ENCODE measurements at regions of chr14 and their contacts with region 1.

Region 1: GRCh38 chr14:58297762-58298476 is 436 bp upstream of the ARID4A start:
- DNase-seq: peak; percentile 96 to 100
- ATAC-seq: peak; percentile 82 to 95 (median 85)
- H3K4me3 ChIP-seq: peak overlapping the region; percentile 96
- H3K4me3 Mint-ChIP-seq: no peak overlapping the region
- H3K27ac ChIP-seq: peak overlapping the region; percentile 97
- H3K27ac Mint-ChIP-seq: no peak overlapping the region
- H3K4me1 ChIP-seq: peaks cover 11% of the 10 kb centered on the region
- H3K4me1 Mint-ChIP-seq: peaks cover 27 to 40% of the 10 kb centered on the region in 2 donors
- H3K27me3 ChIP-seq: no peaks in the 10 kb centered on the region
- H3K27me3 Mint-ChIP-seq: no peaks in the 10 kb centered on the region
- CTCF ChIP-seq: no peak

Region 2: GRCh38 chr14:57652769-57653168 is 645.1 kb before region 1 on chr14:
- intact Hi-C with region 1: no loop called
- DNase-seq: no peak
- ATAC-seq: no peak
- H3K4me3 ChIP-seq: no peak overlapping the region
- H3K4me3 Mint-ChIP-seq: no peak overlapping the region
- H3K27ac ChIP-seq: no peak overlapping the region
- H3K27ac Mint-ChIP-seq: no peak overlapping the region
- H3K4me1 ChIP-seq: no peaks in the 10 kb centered on the region
- H3K4me1 Mint-ChIP-seq: no peaks in the 10 kb centered on the region
- H3K27me3 ChIP-seq: no peaks in the 10 kb centered on the region
- H3K27me3 Mint-ChIP-seq: no peaks in the 10 kb centered on the region
- CTCF ChIP-seq: no peak

Region 3: DNA sequence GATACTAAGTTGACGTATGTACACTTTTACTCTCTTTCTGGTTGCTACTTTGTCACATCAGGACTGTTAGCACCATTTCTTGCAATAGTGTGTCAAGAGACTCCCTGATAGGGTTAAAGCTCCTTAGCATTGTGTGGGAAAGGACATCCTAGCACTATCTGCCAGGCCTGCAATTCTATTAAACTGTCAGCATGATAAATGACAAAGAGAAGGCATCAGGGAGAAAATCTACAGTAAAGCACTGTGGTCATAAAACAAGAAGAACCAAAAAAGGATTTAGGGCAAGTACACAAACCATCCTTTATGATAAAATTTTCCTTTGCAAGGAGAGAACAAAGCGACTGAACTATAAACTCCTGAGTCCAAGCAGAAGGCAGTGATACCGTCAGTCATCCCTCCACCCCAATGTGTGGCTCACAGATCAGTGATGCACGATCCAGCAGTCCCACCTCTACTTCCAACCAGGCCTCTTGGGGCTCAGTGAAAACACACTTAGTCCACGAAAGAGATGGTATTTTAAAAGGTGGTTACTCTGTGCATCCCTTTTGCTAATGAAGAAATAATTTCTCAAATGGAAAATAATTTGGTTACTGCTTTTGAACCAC is 400.7 kb before region 1 on chr14:
- intact Hi-C with region 1: no loop called
- DNase-seq: no peak
- ATAC-seq: no peak
- H3K4me3 ChIP-seq: no peak overlapping the region
- H3K4me3 Mint-ChIP-seq: no peak overlapping the region
- H3K27ac ChIP-seq: no peak overlapping the region
- H3K27ac Mint-ChIP-seq: no peak overlapping the region
- H3K4me1 ChIP-seq: no peaks in the 10 kb centered on the region
- H3K4me1 Mint-ChIP-seq: no peaks in the 10 kb centered on the region
- H3K27me3 ChIP-seq: no peaks in the 10 kb centered on the region
- H3K27me3 Mint-ChIP-seq: peaks cover 0 to 3% of the 10 kb centered on the region in 2 donors
- CTCF ChIP-seq: no peak

Region 4: DNA sequence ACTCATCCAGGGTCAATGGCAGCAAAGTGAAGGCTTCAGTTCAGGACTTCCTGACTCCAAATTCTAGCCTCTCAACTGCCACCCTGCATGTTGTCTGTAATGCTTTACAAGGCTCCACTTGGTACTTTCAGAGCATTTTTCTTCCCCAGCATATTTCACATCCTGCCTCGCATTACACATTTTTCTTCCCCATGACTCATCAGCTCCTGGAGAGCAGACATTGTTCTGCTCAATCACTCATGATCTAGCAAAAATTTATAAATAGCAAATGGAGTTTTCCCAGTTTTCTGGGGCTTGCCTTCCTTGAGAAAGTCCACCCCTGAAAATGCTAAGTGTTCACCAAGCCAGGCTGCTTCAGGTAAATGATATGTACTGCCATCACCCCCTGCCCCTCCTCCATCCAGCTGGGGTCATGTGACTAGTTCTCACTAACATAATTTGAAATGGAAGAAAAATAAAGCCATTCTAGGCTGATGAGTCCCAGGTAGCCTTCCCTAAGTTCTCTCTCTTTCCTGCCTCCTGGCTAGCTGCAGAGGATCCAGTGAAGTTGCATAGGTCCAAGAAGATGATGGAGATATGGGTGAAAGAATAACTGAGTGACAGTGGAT is 215.3 kb before region 1 on chr14:
- intact Hi-C with region 1: no loop called
- DNase-seq: no peak
- ATAC-seq: no peak
- H3K4me3 ChIP-seq: no peak overlapping the region
- H3K4me3 Mint-ChIP-seq: no peak overlapping the region
- H3K27ac ChIP-seq: no peak overlapping the region
- H3K27ac Mint-ChIP-seq: no peak overlapping the region
- H3K4me1 ChIP-seq: no peaks in the 10 kb centered on the region
- H3K4me1 Mint-ChIP-seq: no peaks in the 10 kb centered on the region
- H3K27me3 ChIP-seq: no peaks in the 10 kb centered on the region
- H3K27me3 Mint-ChIP-seq: peaks cover 14 to 45% of the 10 kb centered on the region in 2 donors
- CTCF ChIP-seq: no peak

Region 5: DNA sequence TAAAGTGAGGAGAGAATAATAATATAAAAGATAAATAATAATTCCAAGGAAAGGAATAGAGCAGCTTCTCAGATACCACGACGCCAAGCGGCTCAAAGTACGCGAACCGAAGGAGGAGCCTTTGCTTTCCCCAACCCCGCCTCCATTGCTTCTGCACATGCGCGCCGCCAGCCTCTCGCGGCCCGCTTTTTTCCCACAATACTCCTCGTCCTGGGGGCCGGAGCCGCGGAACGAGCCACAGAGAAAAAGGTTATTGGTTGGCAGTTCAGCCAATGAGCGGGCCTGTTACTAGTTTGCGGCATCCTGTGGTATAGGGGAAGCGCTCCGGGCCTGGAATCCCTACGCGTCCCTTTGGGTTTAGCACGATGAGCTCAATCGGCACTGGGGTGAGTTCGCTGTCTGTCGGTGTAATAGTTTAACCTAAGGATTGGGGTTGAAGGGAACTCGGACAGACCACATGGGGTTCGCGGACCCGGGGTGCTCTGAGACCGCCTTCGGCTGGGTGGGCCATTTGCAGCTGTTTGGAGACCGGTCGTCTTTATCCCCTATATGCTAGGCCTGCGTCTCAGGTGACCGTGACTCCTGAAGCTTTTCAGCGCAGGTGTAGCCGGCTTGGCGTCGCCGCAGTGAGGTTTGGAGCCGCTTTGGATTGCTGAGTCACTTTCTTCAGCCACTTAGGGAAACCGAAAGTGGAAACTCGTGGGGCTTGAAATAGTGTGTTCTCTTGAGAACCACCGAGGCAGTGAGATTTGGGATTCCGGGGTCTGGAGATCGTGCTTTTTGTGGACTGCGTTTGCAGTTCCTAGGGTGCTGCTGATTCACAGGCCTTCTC is 53.1 kb before region 1 on chr14 and contains the start of gene PSMA3:
- intact Hi-C with region 1: loop called (anchors 1 kb)
- DNase-seq: peak; percentile 97 to 98
- ATAC-seq: peak; percentile 88 to 97 (median 92)
- H3K4me3 ChIP-seq: peak within 1 kb of the TSS; percentile 88
- H3K4me3 Mint-ChIP-seq: peak within 1 kb of the TSS; percentile 99
- H3K27ac ChIP-seq: peak within 1 kb of the TSS; percentile 94
- H3K27ac Mint-ChIP-seq: peak within 1 kb of the TSS; percentile 95 to 99
- H3K4me1 ChIP-seq: peaks cover 5% of the 10 kb centered on the region
- H3K4me1 Mint-ChIP-seq: peaks cover 29 to 35% of the 10 kb centered on the region in 2 donors
- H3K27me3 ChIP-seq: no peaks in the 10 kb centered on the region
- H3K27me3 Mint-ChIP-seq: no peaks in the 10 kb centered on the region
- CTCF ChIP-seq: no peak
- total RNA-seq, gene PSMA3: 107 to 120 (median 115) TPM

Region 6: GRCh38 chr14:58331111-58331510 is 33.2 kb after region 1 on chr14:
- intact Hi-C with region 1: loop called (anchors 1 kb)
- DNase-seq: peak; percentile 62 to 99
- ATAC-seq: peak; percentile 91 to 98 (median 96)
- H3K4me3 ChIP-seq: no peak overlapping the region
- H3K4me3 Mint-ChIP-seq: peak overlapping the region; percentile 46
- H3K27ac ChIP-seq: peak overlapping the region; percentile 76
- H3K27ac Mint-ChIP-seq: peak overlapping the region; percentile 88 to 92
- H3K4me1 ChIP-seq: peaks cover 2% of the 10 kb centered on the region
- H3K4me1 Mint-ChIP-seq: peaks cover 11 to 21% of the 10 kb centered on the region in 2 donors
- H3K27me3 ChIP-seq: no peaks in the 10 kb centered on the region
- H3K27me3 Mint-ChIP-seq: no peaks in the 10 kb centered on the region
- CTCF ChIP-seq: no peak